T-cell (primary cell): ENCODE measurements at regions of chrX and their contacts with region 1.

Region 1: GRCh38 chrX:119309661-119310267 is 73.7 kb downstream of the PGRMC1 start:
- DNase-seq: no peak
- ATAC-seq: no peak
- H3K4me3 ChIP-seq: no peak overlapping the region
- H3K4me3 Mint-ChIP-seq: no peak overlapping the region
- H3K27ac ChIP-seq: no peak overlapping the region
- H3K27ac Mint-ChIP-seq: no peak overlapping the region
- H3K4me1 ChIP-seq: no peaks in the 10 kb centered on the region
- H3K4me1 Mint-ChIP-seq: peaks cover 0 to 5% (median 3%) of the 10 kb centered on the region in 3 donors
- H3K27me3 ChIP-seq: no peaks in the 10 kb centered on the region
- H3K27me3 Mint-ChIP-seq: peaks cover 5 to 18% of the 10 kb centered on the region in 2 donors

Region 2: GRCh38 chrX:119363391-119363790 is 53.6 kb after region 1 on chrX:
- CTCF ChIA-PET with region 1: interaction called in 1 of 2 experiments, 10 read pairs
- POLR2A ChIA-PET with region 1: no interaction called
- DNase-seq: no peak
- ATAC-seq: no peak
- H3K4me3 ChIP-seq: no peak overlapping the region
- H3K4me3 Mint-ChIP-seq: no peak overlapping the region
- H3K27ac ChIP-seq: no peak overlapping the region
- H3K27ac Mint-ChIP-seq: no peak overlapping the region
- H3K4me1 ChIP-seq: no peaks in the 10 kb centered on the region
- H3K4me1 Mint-ChIP-seq: no peaks in the 10 kb centered on the region
- H3K27me3 ChIP-seq: no peaks in the 10 kb centered on the region
- H3K27me3 Mint-ChIP-seq: peaks cover 0 to 16% of the 10 kb centered on the region in 2 donors